Mammary epithelial cell (primary cell): ENCODE measurements at regions of chr12 and their contacts with region 1.

Region 1: GRCh38 chr12:113980537-113981337 is 14.6 kb upstream of the RBM19 start:
- DNase-seq: peak; percentile 30
- H3K4me3 ChIP-seq: no peak overlapping the region
- H3K27ac ChIP-seq: no peak overlapping the region
- H3K4me1 ChIP-seq: no peaks in the 10 kb centered on the region
- H3K27me3 ChIP-seq: no peaks in the 10 kb centered on the region
- CTCF ChIP-seq: peak; percentile 99

Region 2: DNA sequence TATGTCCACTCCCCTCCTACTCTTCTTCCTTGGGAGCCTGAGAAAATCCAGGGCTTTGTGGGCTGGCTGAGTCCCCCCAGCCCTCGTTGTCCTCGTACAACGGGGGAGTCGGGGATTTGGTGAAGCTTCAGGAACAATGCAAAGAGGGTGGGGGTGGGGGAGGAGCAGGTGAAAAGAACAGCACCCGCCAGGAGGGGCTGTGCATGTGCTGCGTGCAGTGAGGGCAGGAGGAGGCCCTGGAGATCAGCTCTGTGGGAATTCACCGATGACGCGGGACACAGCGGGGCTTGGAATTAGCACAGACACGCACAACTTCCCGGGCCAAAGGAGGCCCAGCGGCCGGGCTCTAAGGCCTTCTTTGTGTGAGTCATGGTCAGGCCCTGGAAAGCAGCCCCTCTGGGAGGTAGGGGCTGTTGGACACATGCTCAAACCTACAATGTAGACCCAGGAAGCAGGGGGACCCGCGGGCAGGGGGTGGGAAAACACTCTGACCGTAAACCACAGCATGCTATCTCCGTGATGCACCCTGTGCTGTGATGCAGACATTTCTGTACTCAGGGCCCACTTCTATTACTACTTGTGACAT is 47.4 kb before region 1 on chr12:
- CTCF ChIA-PET with region 1: no interaction called
- dilution Hi-C with region 1: no loop called
- in situ Hi-C with region 1: no loop called
- intact Hi-C with region 1: no loop called
- DNase-seq: no peak
- H3K4me3 ChIP-seq: no peak overlapping the region
- H3K27ac ChIP-seq: no peak overlapping the region
- H3K4me1 ChIP-seq: no peaks in the 10 kb centered on the region
- H3K27me3 ChIP-seq: no peaks in the 10 kb centered on the region
- CTCF ChIP-seq: no peak

Region 3: DNA sequence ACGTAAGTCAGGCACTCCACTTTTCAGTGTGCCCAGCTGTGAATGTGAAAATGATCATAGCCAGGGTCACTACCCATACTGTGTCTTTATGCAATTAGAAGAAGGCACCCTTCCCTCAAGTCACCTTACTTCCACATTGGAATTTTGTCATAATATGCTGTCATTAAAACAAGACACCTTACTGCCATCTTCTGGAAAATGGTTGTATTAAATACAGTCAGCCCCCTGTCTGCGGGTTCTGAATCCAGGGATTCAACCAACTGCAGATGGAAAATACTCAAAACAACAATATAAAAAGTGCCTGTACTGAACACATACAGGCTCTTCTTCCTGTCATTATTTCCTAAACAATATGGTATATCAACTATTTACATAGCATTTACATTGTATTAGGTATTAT is 495.4 kb after region 1 on chr12:
- CTCF ChIA-PET with region 1: no interaction called
- dilution Hi-C with region 1: no loop called
- in situ Hi-C with region 1: no loop called
- intact Hi-C with region 1: loop called (anchors 1 kb)
- DNase-seq: peak; percentile 1
- H3K4me3 ChIP-seq: no peak overlapping the region
- H3K27ac ChIP-seq: no peak overlapping the region
- H3K4me1 ChIP-seq: no peaks in the 10 kb centered on the region
- H3K27me3 ChIP-seq: peaks cover 18% of the 10 kb centered on the region
- CTCF ChIP-seq: peak; percentile 17 to 36

Region 4: DNA sequence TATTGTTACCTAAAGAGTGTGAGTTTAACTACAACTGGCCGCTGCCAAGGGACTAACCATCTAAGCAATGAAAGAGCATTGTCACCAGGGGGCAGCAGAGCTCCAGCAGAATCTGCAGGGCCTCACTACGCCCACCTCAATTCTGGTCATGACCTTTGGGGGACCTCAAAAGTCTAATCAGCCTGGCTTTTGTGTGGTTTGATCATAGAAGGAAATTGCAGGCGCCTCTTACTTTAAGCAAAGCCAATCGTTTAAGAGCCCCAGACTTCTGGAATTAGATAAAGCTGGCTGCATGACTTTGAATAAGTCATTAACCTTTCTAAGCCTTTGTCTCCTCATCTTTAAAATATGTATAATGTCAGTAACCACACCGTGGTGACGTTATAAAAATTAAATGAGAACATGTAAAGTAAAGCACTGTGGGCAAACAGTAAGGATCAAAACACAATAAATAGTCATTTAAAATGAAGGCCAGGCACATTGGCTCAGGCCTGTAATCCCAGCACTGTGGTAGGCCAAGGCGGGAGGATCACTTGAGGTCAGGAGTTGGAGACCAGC is 644.6 kb after region 1 on chr12:
- CTCF ChIA-PET with region 1: no interaction called
- dilution Hi-C with region 1: no loop called
- in situ Hi-C with region 1: no loop called
- intact Hi-C with region 1: loop called (anchors 5 kb)
- DNase-seq: peak; percentile 26
- H3K4me3 ChIP-seq: no peak overlapping the region
- H3K27ac ChIP-seq: no peak overlapping the region
- H3K4me1 ChIP-seq: peaks cover 3% of the 10 kb centered on the region
- H3K27me3 ChIP-seq: no peaks in the 10 kb centered on the region
- CTCF ChIP-seq: peak; percentile 90 to 93

Region 5: GRCh38 chr12:114662512-114663177 is 681.9 kb after region 1 on chr12:
- CTCF ChIA-PET with region 1: no interaction called
- dilution Hi-C with region 1: no loop called
- in situ Hi-C with region 1: no loop called
- intact Hi-C with region 1: loop called (anchors 1 kb)
- DNase-seq: peak; percentile 78
- H3K4me3 ChIP-seq: no peak overlapping the region
- H3K27ac ChIP-seq: no peak overlapping the region
- H3K4me1 ChIP-seq: peaks cover 4% of the 10 kb centered on the region
- H3K27me3 ChIP-seq: no peaks in the 10 kb centered on the region
- CTCF ChIP-seq: peak; percentile 89 to 95

Region 6: GRCh38 chr12:115632308-115632707 is 1651.6 kb after region 1 on chr12:
- CTCF ChIA-PET with region 1: no interaction called
- dilution Hi-C with region 1: no loop called
- in situ Hi-C with region 1: no loop called
- intact Hi-C with region 1: loop called (anchors 10 kb)
- DNase-seq: peak; percentile 8
- H3K4me3 ChIP-seq: no peak overlapping the region
- H3K27ac ChIP-seq: no peak overlapping the region
- H3K4me1 ChIP-seq: no peaks in the 10 kb centered on the region
- H3K27me3 ChIP-seq: peaks cover 3% of the 10 kb centered on the region
- CTCF ChIP-seq: peak; percentile 23 to 61